ENCODE measurements at regions of chr12 and their contacts with region 1.

Region 1: GRCh38 chr12:32512910-32513309 is 113.6 kb downstream of the FGD4 start:
- DNase-seq: no peak
- CTCF ChIP-seq: no peak

Region 2: DNA sequence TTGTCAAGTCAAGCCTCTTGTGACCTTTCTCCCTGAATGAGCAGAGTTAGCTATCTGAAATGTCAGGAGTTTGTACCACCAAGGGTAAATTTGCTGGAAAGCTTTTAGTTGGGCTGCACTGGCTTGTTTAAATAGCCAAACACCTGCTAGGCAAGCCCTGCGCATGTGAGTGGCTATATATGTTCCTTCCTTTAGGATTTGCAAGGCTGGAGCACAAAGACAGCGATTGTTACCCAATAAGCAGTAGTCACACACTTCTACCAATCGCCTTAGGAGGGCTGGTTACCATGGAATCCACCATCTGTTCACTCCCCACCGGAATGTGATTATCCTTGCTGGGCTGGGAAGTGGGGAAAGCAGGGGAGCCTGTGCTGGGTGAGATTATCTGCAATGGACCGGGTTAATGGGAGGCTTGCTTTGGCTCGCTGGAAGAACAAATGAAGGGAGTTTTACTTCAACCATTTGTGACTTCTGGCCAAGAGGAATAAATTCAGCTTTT is 11.0 kb before region 1 on chr12:
- CTCF ChIA-PET with region 1: interaction called, 12 read pairs
- POLR2A ChIA-PET with region 1: no interaction called
- DNase-seq: no peak
- CTCF ChIP-seq: no peak

Region 3: GRCh38 chr12:32548691-32549281 is 35.9 kb after region 1 on chr12:
- CTCF ChIA-PET with region 1: no interaction called
- POLR2A ChIA-PET with region 1: no interaction called
- DNase-seq: no peak
- CTCF ChIP-seq: no peak

Measured in GM10248 (cell line).